CD14-positive monocyte (primary cell): ENCODE measurements at regions of chr1 and their contacts with region 1.

Region 1: DNA sequence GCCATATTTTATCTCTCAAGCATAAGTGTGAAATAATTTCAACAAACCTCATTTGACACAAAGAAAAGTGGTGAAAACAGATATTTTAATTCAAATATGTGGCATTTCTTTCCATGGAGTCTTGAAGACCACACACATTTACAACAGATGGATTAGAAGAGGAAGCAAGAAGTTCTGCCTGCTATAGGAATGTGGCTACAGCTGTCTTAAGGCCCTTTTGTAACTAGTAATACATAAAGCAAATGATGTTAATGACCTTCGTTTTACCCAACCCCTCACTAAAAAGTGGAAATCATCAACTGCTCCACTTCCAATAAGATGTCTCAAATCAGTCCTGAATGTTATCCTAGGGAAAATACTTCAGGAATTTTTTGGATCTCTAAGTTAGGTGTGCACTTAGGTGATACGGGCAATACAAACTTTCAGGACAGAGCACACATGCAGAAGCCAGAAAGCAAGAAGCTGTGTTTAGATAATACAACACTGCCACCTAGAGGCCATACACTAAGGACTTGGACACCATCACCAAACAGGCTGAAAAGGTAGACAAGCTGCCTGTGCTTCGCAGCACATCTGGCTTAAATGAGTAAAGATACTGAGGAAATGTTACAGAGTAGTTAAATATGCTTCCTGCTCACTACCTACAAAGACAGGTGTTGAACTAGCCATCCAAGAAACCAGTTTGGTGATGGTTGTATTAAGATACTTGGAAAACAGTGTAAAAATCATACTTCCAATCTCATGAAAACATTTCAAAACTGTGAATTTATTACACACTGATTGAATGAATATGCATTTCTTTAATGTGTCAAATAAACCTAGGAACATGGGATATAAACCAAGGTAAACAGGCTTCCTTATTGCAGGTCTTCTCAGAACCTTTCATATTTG is 24.4 kb downstream of the RRAGC start:
- DNase-seq: peak; percentile 63 to 77 (median 75)
- H3K4me3 ChIP-seq: no peak overlapping the region
- H3K4me3 Mint-ChIP-seq: no peak overlapping the region
- H3K27ac ChIP-seq: no peak overlapping the region
- H3K27ac Mint-ChIP-seq: no peak overlapping the region
- H3K4me1 ChIP-seq: peaks cover 30 to 36% of the 10 kb centered on the region in 2 donors
- H3K4me1 Mint-ChIP-seq: peaks cover 48% of the 10 kb centered on the region
- H3K27me3 ChIP-seq: no peaks in the 10 kb centered on the region
- H3K27me3 Mint-ChIP-seq: peaks cover 0 to 2% (median 0%) of the 10 kb centered on the region in 3 donors
- CTCF ChIP-seq: peak; percentile 83

Region 2: GRCh38 chr1:38026592-38027200 is 808.5 kb before region 1 on chr1:
- intact Hi-C with region 1: loop called in 1 of 2 experiments (anchors 10 kb)
- DNase-seq: no peak
- H3K4me3 ChIP-seq: no peak overlapping the region
- H3K4me3 Mint-ChIP-seq: no peak overlapping the region
- H3K27ac ChIP-seq: no peak overlapping the region
- H3K27ac Mint-ChIP-seq: peak overlapping the region in 3 of 7 donors; percentile 2 to 25 (median 18)
- H3K4me1 ChIP-seq: peaks cover 13 to 14% of the 10 kb centered on the region in 2 donors
- H3K4me1 Mint-ChIP-seq: peaks cover 28% of the 10 kb centered on the region
- H3K27me3 ChIP-seq: no peaks in the 10 kb centered on the region
- H3K27me3 Mint-ChIP-seq: peaks cover 5 to 16% (median 10%) of the 10 kb centered on the region in 3 donors
- CTCF ChIP-seq: no peak

Region 3: DNA sequence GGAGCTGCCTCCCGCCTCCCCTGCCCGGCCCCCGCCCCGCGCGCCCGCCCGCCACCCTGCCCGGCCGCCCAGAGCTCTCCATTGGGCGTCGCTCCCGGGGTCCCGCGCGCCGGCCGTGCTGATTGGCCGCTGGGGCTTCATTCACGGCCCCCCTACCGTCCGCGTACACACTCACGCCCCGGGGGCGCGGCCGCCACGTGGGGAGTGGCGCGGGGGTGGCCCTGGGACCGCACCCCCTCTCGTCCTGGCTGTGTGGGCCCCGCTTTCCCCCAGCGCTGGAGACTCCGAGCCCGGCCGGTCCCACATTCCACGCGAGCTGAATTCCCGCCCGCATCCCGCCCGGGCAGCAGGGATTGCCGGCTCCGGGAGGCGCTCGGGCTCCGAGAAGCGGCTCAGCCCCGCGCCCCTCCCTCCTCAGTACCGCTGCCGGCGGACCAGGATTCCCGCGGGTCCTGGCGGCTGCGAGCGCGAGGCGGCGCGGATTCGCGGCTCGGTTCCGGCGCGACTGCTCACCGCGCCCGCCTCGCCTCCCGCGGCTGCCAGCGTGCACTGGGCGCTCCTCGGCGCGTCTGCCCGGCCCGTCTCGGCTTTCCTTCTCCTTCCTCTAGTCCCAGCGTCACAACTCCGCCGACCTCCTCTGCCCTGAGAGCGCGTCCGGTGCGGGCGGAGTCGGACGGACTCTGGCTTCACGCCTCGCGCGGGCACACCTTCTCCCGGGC is 788.1 kb before region 1 on chr1:
- intact Hi-C with region 1: loop called in 1 of 2 experiments (anchors 10 kb)
- DNase-seq: no peak
- H3K4me3 ChIP-seq: peak overlapping the region in 2 of 3 experiments; percentile 42 to 70
- H3K4me3 Mint-ChIP-seq: peak overlapping the region; percentile 72 to 89
- H3K27ac ChIP-seq: no peak overlapping the region
- H3K27ac Mint-ChIP-seq: no peak overlapping the region
- H3K4me1 ChIP-seq: peaks cover 9 to 22% of the 10 kb centered on the region in 2 donors
- H3K4me1 Mint-ChIP-seq: peaks cover 12% of the 10 kb centered on the region
- H3K27me3 ChIP-seq: peaks cover 43 to 71% of the 10 kb centered on the region in 2 donors
- H3K27me3 Mint-ChIP-seq: peaks cover 60 to 80% (median 62%) of the 10 kb centered on the region in 3 donors
- CTCF ChIP-seq: no peak

Region 4: GRCh38 chr1:38586993-38587646 is 248.1 kb before region 1 on chr1:
- intact Hi-C with region 1: no loop called
- DNase-seq: peak; percentile 9 to 25 (median 11)
- H3K4me3 ChIP-seq: no peak overlapping the region
- H3K4me3 Mint-ChIP-seq: peak overlapping the region in 1 of 2 donors; percentile 46
- H3K27ac ChIP-seq: no peak overlapping the region
- H3K27ac Mint-ChIP-seq: no peak overlapping the region
- H3K4me1 ChIP-seq: no peaks in the 10 kb centered on the region
- H3K4me1 Mint-ChIP-seq: peaks cover 3% of the 10 kb centered on the region
- H3K27me3 ChIP-seq: peaks cover 0 to 2% of the 10 kb centered on the region in 2 donors
- H3K27me3 Mint-ChIP-seq: peaks cover 8 to 10% (median 10%) of the 10 kb centered on the region in 3 donors
- CTCF ChIP-seq: peak; percentile 83

Region 5: DNA sequence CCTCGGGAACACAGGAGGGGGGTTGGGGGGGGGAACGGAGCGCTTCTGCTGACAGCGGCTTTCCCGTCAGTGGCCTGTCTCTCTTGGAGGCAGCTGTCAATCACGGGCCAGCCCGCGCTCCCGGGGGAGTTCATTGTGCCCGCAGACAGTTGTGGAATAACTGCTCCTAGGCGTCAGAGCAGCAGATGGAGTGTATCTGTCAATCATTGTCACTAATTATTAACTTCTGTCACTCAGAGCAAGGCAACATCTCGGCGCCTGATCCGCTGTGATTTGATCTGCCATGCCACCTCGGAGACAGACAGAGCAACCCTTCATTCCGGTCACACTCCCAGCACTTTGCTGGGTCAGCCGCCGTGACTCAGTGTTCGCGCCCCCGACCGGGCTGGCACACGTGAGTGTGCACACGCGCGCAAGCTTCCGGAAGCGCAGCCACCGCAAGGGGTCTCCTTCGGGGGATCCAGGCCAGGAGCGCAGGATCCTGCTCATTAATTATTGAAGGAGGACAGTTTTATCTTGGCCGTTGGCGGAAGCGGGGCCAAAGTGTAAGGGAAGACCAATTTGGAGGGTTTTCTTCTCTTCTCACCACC is 51.4 kb before region 1 on chr1:
- intact Hi-C with region 1: no loop called
- DNase-seq: no peak
- H3K4me3 ChIP-seq: no peak overlapping the region
- H3K4me3 Mint-ChIP-seq: peak overlapping the region in 1 of 2 donors; percentile 62
- H3K27ac ChIP-seq: no peak overlapping the region
- H3K27ac Mint-ChIP-seq: no peak overlapping the region
- H3K4me1 ChIP-seq: no peaks in the 10 kb centered on the region
- H3K4me1 Mint-ChIP-seq: peaks cover 2% of the 10 kb centered on the region
- H3K27me3 ChIP-seq: peaks cover 21 to 30% of the 10 kb centered on the region in 2 donors
- H3K27me3 Mint-ChIP-seq: peaks cover 38 to 67% (median 51%) of the 10 kb centered on the region in 3 donors
- CTCF ChIP-seq: no peak

Region 6: GRCh38 chr1:38873027-38873969 is 38.1 kb after region 1 on chr1 and contains the start of gene MYCBP:
- intact Hi-C with region 1: no loop called
- DNase-seq: peak; percentile 92 to 94 (median 93)
- H3K4me3 ChIP-seq: peak within 1 kb of the TSS; percentile 74 to 91 (median 82)
- H3K4me3 Mint-ChIP-seq: peak within 1 kb of the TSS; percentile 92
- H3K27ac ChIP-seq: peak within 1 kb of the TSS; percentile 27 to 75
- H3K27ac Mint-ChIP-seq: peak within 1 kb of the TSS; percentile 63 to 88 (median 81)
- H3K4me1 ChIP-seq: peaks cover 21 to 29% of the 10 kb centered on the region in 2 donors
- H3K4me1 Mint-ChIP-seq: peaks cover 22% of the 10 kb centered on the region
- H3K27me3 ChIP-seq: no peaks in the 10 kb centered on the region
- H3K27me3 Mint-ChIP-seq: peaks cover 0 to 2% (median 2%) of the 10 kb centered on the region in 3 donors
- CTCF ChIP-seq: no peak
- polyA plus RNA-seq, gene MYCBP: 9.3 to 92.3 (median 77.2) TPM